ENCODE measurements at regions of chr12 and their contacts with region 1.

Region 1: GRCh38 chr12:44947163-44947562 is 71.0 kb upstream of the NELL2 start:
- DNase-seq: no peak
- H3K4me3 Mint-ChIP-seq: no peak overlapping the region
- H3K27ac Mint-ChIP-seq: no peak overlapping the region
- H3K4me1 Mint-ChIP-seq: peaks cover 2% of the 10 kb centered on the region
- H3K27me3 Mint-ChIP-seq: peaks cover 4% of the 10 kb centered on the region

Region 2: DNA sequence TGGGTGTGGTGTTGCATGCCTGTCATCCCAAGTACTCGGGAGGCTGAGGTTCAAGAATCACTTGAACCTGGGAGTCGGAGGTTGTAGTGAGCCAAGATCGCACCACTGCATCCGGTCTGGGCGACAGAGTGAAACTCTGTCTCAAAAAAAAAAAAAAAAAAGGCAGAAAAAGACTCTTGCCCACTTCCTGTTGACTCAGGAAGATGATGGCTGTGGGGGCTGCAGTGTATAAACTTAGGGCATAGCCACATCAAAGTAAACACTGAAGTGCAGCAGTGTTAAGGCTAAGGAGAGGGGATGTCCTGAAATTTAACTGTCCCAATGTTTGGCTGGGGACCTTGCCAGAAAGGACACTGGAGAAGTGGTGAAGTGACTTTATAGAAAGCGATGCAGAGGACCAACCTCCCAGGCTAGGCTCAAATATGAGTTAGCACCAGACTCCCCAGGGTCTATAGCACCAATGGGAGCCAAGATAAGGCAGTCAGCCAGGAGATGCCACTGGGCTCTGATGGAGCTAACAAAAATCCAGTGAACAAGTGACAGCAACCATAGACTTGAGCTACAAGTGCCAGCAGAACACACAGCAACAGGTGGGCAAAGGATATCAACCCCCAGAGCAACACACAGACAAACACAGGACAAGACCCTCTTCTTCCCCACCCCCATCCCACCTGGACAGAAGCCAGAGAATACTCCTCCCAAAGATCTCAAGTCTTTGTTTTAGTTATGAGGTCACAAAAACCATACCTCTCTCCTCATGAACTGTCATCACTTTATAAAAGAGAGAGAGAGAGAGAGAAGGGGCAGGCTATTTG is 99.1 kb before region 1 on chr12:
- CTCF ChIA-PET with region 1: no interaction called
- intact Hi-C with region 1: no loop called
- DNase-seq: peak; percentile 79
- H3K4me3 Mint-ChIP-seq: peak overlapping the region; percentile 55
- H3K27ac Mint-ChIP-seq: peak overlapping the region; percentile 94
- H3K4me1 Mint-ChIP-seq: peaks cover 72% of the 10 kb centered on the region
- H3K27me3 Mint-ChIP-seq: no peaks in the 10 kb centered on the region

Region 3: DNA sequence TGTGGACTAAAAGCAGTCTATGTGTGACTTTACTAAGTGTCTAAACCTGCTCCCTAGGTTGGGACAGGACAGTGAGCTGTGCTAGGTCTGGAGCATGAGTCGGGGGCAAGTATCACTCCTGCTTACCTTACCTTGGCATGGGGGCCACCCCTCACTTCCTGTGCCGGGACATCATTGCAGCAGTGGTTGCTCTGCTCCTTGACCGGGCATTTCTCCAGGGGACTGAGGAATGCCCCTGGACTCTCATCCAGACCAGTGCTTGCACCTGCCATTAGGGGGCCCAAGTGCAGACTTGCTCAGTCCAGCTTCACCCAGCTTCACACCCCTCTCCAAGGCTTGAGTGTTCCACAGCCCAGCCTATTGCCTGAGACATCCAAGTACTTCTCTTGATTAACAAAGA is 13.7 kb after region 1 on chr12:
- CTCF ChIA-PET with region 1: interaction called, 13 read pairs
- intact Hi-C with region 1: no loop called
- DNase-seq: no peak
- H3K4me3 Mint-ChIP-seq: no peak overlapping the region
- H3K27ac Mint-ChIP-seq: no peak overlapping the region
- H3K4me1 Mint-ChIP-seq: no peaks in the 10 kb centered on the region
- H3K27me3 Mint-ChIP-seq: peaks cover 3% of the 10 kb centered on the region

Region 4: GRCh38 chr12:45093051-45093450 is 145.9 kb after region 1 on chr12:
- CTCF ChIA-PET with region 1: no interaction called
- intact Hi-C with region 1: no loop called
- DNase-seq: no peak
- H3K4me3 Mint-ChIP-seq: no peak overlapping the region
- H3K27ac Mint-ChIP-seq: no peak overlapping the region
- H3K4me1 Mint-ChIP-seq: no peaks in the 10 kb centered on the region
- H3K27me3 Mint-ChIP-seq: peaks cover 25% of the 10 kb centered on the region

Region 5: GRCh38 chr12:46744283-46744682 is 1797.1 kb after region 1 on chr12:
- CTCF ChIA-PET with region 1: no interaction called
- intact Hi-C with region 1: no loop called
- DNase-seq: no peak
- H3K4me3 Mint-ChIP-seq: no peak overlapping the region
- H3K27ac Mint-ChIP-seq: no peak overlapping the region
- H3K4me1 Mint-ChIP-seq: no peaks in the 10 kb centered on the region
- H3K27me3 Mint-ChIP-seq: peaks cover 2% of the 10 kb centered on the region

Measured in activated naive CD4-positive, alpha-beta T cell treated with anti-CD3 and anti-CD28 coated beads for 36 hours (primary cell).